Prostate gland (tissue), 2 donors: ENCODE measurements at regions of chr3 and their contacts with region 1.

Region 1: GRCh38 chr3:66276705-66277274 is 56.0 kb downstream of the SLC25A26 start:
- DNase-seq: peak; percentile 59
- H3K4me3 ChIP-seq: no peak overlapping the region
- H3K27ac ChIP-seq: no peak overlapping the region
- H3K4me1 ChIP-seq: no peaks in the 10 kb centered on the region
- H3K27me3 ChIP-seq: no peaks in the 10 kb centered on the region
- CTCF ChIP-seq: peak in 3 of 4 experiments; percentile 57 to 74 (median 58)
- POLR2A ChIP-seq: no peak

Region 2: GRCh38 chr3:66372681-66373350 is 96.0 kb after region 1 on chr3:
- intact Hi-C with region 1: loop called (anchors 10 kb)
- DNase-seq: no peak
- H3K4me3 ChIP-seq: no peak overlapping the region
- H3K27ac ChIP-seq: no peak overlapping the region
- H3K4me1 ChIP-seq: no peaks in the 10 kb centered on the region
- H3K27me3 ChIP-seq: no peaks in the 10 kb centered on the region
- CTCF ChIP-seq: peak in 2 of 4 experiments; percentile 23 to 32
- POLR2A ChIP-seq: no peak

Region 3: GRCh38 chr3:66398246-66399034 is 121.7 kb after region 1 on chr3:
- intact Hi-C with region 1: loop called (anchors 5 kb)
- DNase-seq: no peak
- H3K4me3 ChIP-seq: no peak overlapping the region
- H3K27ac ChIP-seq: peak overlapping the region in 1 of 2 donors; percentile 4
- H3K4me1 ChIP-seq: peaks cover 19% of the 10 kb centered on the region
- H3K27me3 ChIP-seq: no peaks in the 10 kb centered on the region
- CTCF ChIP-seq: no peak
- POLR2A ChIP-seq: no peak

Region 4: GRCh38 chr3:66500576-66501482 is 224.0 kb after region 1 on chr3 and contains the start of gene LRIG1:
- intact Hi-C with region 1: loop called (anchors 10 kb)
- DNase-seq: peak; percentile 100
- H3K4me3 ChIP-seq: peak within 1 kb of the TSS; percentile 98 to 99
- H3K27ac ChIP-seq: peak within 1 kb of the TSS; percentile 92 to 97
- H3K4me1 ChIP-seq: peaks cover under 1% of the 10 kb centered on the region
- H3K27me3 ChIP-seq: no peaks in the 10 kb centered on the region
- CTCF ChIP-seq: peak; percentile 33 to 63 (median 50)
- POLR2A ChIP-seq: peak; percentile 86
- total RNA-seq, gene LRIG1: 119 to 186 TPM

Region 5: DNA sequence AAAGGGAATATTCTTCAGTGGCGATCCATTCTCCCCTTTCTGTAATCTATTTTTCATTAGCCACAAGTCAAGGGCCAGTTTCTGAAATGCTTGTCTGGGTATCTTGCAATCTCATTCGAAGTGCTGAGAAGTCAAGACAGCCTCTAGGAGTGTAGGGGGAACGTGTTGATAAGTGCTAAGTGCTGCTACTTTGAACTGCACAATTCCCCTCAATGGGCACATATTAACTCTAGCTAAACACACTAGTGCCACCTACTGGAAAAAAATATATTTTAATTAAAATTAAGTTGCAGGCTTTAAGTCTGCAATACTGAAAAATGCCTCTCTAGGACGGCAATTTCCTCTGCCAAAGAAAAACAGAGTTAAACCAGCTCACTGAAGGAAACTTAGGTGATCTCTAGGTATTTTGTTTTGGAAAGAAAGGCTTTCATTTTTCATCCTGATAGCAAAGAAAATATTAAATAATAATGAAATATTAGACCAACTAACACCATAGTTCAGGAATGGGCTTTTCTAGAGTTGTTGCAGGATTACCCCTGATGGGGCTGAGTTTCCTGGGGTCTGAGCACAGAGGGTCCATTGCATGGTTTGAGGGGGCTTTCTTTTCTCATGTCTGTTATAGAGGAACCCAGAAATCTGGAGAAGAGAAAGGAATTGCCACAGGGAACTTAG is 539.4 kb after region 1 on chr3:
- intact Hi-C with region 1: loop called (anchors 2 kb)
- DNase-seq: no peak
- H3K4me3 ChIP-seq: no peak overlapping the region
- H3K27ac ChIP-seq: no peak overlapping the region
- H3K4me1 ChIP-seq: no peaks in the 10 kb centered on the region
- H3K27me3 ChIP-seq: no peaks in the 10 kb centered on the region
- CTCF ChIP-seq: peak; percentile 40 to 74 (median 64)
- POLR2A ChIP-seq: no peak